ENCODE measurements at regions of chr16 and their contacts with region 1.

Region 1: GRCh38 chr16:62077998-62078397 is 41.8 kb upstream of the CDH8 start:
- DNase-seq: peak; percentile 75
- ATAC-seq: peak; percentile 99
- H3K4me3 Mint-ChIP-seq: no peak overlapping the region
- H3K27ac Mint-ChIP-seq: no peak overlapping the region
- H3K4me1 Mint-ChIP-seq: peaks cover 7% of the 10 kb centered on the region
- H3K27me3 Mint-ChIP-seq: no peaks in the 10 kb centered on the region; the same call in 1 of the 2 replicates
- CTCF ChIP-seq: peak; percentile 56

Region 2: GRCh38 chr16:61936522-61936921 is 141.5 kb before region 1 on chr16:
- CTCF ChIA-PET with region 1: interaction called, 37 read pairs
- POLR2A ChIA-PET with region 1: no interaction called
- DNase-seq: peak; percentile 40
- ATAC-seq: peak; percentile 78
- H3K4me3 Mint-ChIP-seq: no peak overlapping the region
- H3K27ac Mint-ChIP-seq: no peak overlapping the region
- H3K4me1 Mint-ChIP-seq: peaks cover 14% of the 10 kb centered on the region
- H3K27me3 Mint-ChIP-seq: no peaks in the 10 kb centered on the region
- CTCF ChIP-seq: peak; percentile 51

Region 3: DNA sequence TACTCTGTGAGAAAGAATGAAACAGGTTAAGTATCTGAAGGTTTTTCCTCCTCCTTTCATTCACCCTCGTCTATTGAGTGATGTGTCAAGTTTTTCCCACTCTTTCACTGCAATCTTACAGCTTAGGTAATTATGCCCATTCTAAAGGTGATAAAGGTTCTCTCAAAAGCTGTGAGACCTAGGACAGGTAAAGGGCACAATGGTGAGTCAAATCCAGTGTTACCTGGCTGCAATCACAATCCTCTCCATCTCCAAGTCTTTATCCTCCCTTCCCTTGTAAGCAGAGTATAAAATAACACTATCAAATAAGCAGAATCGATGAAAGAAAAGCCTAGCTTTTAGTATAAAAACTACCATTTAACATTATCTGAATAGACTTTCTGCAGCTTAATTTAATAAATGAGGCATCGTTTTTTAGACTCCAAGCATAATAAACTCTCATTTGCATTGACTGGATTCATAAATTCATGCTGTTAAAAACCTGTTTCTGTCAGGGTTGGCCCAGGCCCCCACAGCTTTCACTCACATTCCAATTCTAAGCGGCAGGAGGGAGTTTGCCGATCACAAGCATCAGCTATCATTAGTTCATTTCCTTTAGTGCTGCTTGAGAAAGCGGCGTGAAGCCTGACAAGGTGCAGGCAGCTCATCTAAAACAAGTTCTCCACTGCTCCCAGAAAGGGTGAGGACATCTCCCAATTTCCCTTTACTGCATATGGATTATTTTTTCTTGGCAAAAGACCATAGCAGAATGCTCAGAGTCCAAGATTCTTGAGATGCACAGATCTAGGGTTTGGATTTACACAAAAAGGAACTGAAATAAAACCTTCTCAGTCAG is 109.5 kb before region 1 on chr16:
- CTCF ChIA-PET with region 1: interaction called, 10 read pairs
- POLR2A ChIA-PET with region 1: no interaction called
- DNase-seq: peak; percentile 16
- ATAC-seq: peak; percentile 72
- H3K4me3 Mint-ChIP-seq: no peak overlapping the region
- H3K27ac Mint-ChIP-seq: peak overlapping the region; percentile 82
- H3K4me1 Mint-ChIP-seq: peaks cover 51% of the 10 kb centered on the region
- H3K27me3 Mint-ChIP-seq: no peaks in the 10 kb centered on the region; the same call in 1 of the 2 replicates
- CTCF ChIP-seq: no peak

Region 4: GRCh38 chr16:62036101-62036801 is 41.7 kb before region 1 on chr16 and contains the start of gene CDH8:
- CTCF ChIA-PET with region 1: interaction called, 24 read pairs
- POLR2A ChIA-PET with region 1: no interaction called
- DNase-seq: peak; percentile 76
- ATAC-seq: peak; percentile 56
- H3K4me3 Mint-ChIP-seq: peak within 1 kb of the TSS; percentile 84
- H3K27ac Mint-ChIP-seq: no peak within 1 kb of the TSS
- H3K4me1 Mint-ChIP-seq: peaks cover 54% of the 10 kb centered on the region
- H3K27me3 Mint-ChIP-seq: peaks cover 73% of the 10 kb centered on the region
- CTCF ChIP-seq: no peak
- total RNA-seq, gene CDH8: 11.1 to 15.9 TPM (median 12.8 TPM) in 3 replicates

Region 5: GRCh38 chr16:62041401-62041800 is 36.6 kb before region 1 on chr16:
- CTCF ChIA-PET with region 1: interaction called, 24 read pairs
- POLR2A ChIA-PET with region 1: no interaction called
- DNase-seq: peak; percentile 34
- ATAC-seq: peak; percentile 79
- H3K4me3 Mint-ChIP-seq: no peak overlapping the region
- H3K27ac Mint-ChIP-seq: no peak overlapping the region
- H3K4me1 Mint-ChIP-seq: peaks cover 41% of the 10 kb centered on the region
- H3K27me3 Mint-ChIP-seq: peaks cover 26% of the 10 kb centered on the region
- CTCF ChIP-seq: 0 out of 2 replicates have a peak, but pooled peaks have one; percentile 28

Region 6: GRCh38 chr16:62135911-62136310 is 57.9 kb after region 1 on chr16:
- CTCF ChIA-PET with region 1: no interaction called
- POLR2A ChIA-PET with region 1: no interaction called
- DNase-seq: no peak
- ATAC-seq: no peak
- H3K4me3 Mint-ChIP-seq: no peak overlapping the region
- H3K27ac Mint-ChIP-seq: no peak overlapping the region
- H3K4me1 Mint-ChIP-seq: no peaks in the 10 kb centered on the region
- H3K27me3 Mint-ChIP-seq: no peaks in the 10 kb centered on the region
- CTCF ChIP-seq: no peak

Measured in WTC11 (cell line).